Dendritic cell treated with granulocyte-macrophage colony-stimulating factor and Interleukin-4, amounts not matched to agents 40 ng/mL and 50 ng/mL, for 4 days (primary cell): ENCODE measurements at regions of chr4 and their contacts with region 1.

Region 1: GRCh38 chr4:129093191-129093920 is at the start of gene SCLT1:
- H3K4me3 Mint-ChIP-seq: no peak within 1 kb of the TSS
- H3K27ac Mint-ChIP-seq: no peak within 1 kb of the TSS
- H3K4me1 Mint-ChIP-seq: peaks cover 41% of the 10 kb centered on the region
- H3K27me3 Mint-ChIP-seq: no peaks in the 10 kb centered on the region

Region 2: DNA sequence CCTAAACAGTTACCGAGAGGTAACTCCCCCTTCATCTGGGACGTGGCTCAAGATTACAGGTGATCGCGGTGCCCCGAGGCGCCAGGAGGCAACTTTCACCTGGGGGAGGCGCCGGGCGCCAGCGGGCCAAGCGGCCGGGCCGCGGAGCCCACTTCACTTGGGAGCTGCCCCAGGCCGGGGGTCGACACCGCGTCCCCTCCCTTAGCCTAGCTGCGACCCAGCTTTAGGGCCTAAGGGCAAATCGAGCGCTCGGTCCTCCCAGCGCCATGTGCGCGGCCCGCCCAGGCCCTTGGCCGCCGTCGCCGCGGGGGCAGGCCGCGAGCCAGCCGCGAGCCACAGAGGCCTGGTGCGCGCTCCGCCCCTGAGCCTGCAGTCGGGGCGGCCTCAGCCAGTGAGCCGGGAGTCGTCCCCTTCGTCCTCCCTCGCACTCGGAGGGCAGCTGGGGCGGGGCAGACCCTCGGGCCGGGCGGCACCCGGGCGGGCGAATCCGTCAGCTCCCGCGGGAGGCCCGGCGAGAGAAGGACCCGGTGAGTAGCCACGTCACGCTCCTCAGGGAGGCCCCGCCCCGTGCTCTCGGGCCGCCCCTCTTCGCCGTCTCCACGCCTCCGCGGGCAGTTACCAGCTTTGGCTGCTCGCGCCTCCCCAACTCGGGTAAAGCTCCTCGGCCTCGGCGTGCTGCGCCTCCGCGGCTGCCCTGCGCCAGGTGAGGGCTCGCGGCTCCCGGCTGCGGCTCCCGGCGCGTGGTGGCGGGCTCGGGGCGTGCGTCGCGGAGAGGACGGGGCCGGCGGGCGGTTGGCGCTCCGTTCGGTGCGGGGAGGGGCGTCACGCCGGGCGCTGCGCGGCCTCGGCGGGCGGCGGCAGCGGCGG is 1032.4 kb before region 1 on chr4 and contains the start of gene LARP1B:
- intact Hi-C with region 1: loop called (anchors 5 kb)
- H3K4me3 Mint-ChIP-seq: peak within 1 kb of the TSS; percentile 78
- H3K27ac Mint-ChIP-seq: peak within 1 kb of the TSS; percentile 87
- H3K4me1 Mint-ChIP-seq: peaks cover 10% of the 10 kb centered on the region
- H3K27me3 Mint-ChIP-seq: peaks cover 2% of the 10 kb centered on the region

Region 3: DNA sequence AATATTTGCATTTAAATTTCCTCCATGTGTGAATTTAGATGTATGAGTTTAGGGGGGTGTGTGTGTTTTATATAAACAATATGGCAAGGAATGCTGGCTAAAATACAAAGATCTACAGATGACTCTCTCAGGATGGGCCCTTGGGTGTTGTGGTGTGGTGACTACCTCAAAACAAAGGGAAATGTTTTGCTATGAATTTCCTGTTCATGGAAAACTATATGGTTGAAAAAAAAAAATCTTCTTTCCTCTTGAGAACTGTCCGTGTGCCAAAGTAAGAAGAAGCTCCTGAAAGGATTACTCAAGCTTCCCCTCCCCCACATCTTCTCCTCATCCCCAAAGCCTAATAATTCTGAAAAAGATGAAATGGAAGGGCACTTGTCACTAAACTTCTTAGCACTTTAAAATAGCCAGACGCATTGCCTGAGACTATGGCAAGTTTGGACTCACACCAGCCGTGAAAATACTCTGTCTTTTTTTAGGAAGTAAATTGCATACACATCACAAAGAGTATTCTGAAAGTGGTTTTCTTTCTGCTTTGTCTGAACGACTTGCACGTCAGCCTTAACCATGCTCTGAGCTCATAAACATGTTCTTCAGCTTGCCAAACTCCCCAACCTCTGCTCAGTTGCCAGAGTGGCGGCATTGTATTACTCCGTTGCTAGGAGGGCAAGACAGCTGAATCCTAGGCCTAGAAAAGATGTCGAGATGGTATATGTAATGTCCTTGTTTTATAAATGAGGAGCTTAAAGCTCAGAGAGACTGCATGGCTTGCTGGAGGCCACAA is 534.3 kb before region 1 on chr4:
- intact Hi-C with region 1: loop called (anchors 10 kb)
- H3K4me3 Mint-ChIP-seq: no peak overlapping the region
- H3K27ac Mint-ChIP-seq: peak overlapping the region; percentile 80
- H3K4me1 Mint-ChIP-seq: peaks cover 39% of the 10 kb centered on the region
- H3K27me3 Mint-ChIP-seq: no peaks in the 10 kb centered on the region

Region 4: GRCh38 chr4:128916832-128917231 is 176.5 kb before region 1 on chr4:
- intact Hi-C with region 1: loop called (anchors 5 kb)
- H3K4me3 Mint-ChIP-seq: peak overlapping the region; percentile 34
- H3K27ac Mint-ChIP-seq: peak overlapping the region; percentile 74
- H3K4me1 Mint-ChIP-seq: peaks cover 38% of the 10 kb centered on the region
- H3K27me3 Mint-ChIP-seq: no peaks in the 10 kb centered on the region

Region 5: DNA sequence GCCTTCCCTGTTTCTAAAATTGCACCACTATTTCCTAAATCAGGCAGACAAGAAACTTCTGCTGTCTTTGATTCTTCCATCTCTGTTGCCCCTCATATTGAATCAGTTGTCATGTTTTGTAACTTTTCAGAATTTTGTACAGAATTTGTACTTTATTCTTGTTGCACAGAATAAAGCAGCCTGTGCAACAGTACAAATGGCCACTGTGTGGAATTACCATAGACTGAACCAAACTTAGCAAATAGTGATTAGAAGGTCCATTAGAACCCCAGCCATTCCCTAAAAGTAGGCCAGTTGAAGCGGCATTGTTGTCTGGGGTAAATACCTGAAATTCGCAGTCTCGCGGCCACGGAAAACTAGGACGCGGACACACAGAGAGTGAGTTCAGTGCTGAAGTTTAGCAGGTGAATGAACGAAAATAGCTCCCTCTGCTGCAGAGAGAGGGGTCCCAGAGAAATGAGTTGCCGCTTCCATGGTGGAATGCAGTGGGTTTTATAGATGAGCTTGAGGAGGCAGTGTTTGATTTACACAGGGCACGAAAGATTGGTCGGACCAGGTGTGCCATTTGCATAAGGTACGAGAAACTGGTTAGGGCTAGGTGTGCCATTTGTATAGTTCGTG is 74.4 kb after region 1 on chr4:
- intact Hi-C with region 1: no loop called
- H3K4me3 Mint-ChIP-seq: no peak overlapping the region
- H3K27ac Mint-ChIP-seq: no peak overlapping the region
- H3K4me1 Mint-ChIP-seq: no peaks in the 10 kb centered on the region
- H3K27me3 Mint-ChIP-seq: peaks cover 17% of the 10 kb centered on the region